K562 (cell line): ENCODE measurements at regions of chr1 and their contacts with region 1.

Region 1: GRCh38 chr1:51519048-51519864 is at the start of gene EPS15:
- DNase-seq: peak; percentile 94 to 96 (median 96)
- ATAC-seq: peak; percentile 73
- H3K4me3 ChIP-seq: peak within 1 kb of the TSS; percentile 59
- H3K27ac ChIP-seq: peak within 1 kb of the TSS; percentile 84
- H3K4me1 ChIP-seq: peaks cover 9 to 37% of the 10 kb centered on the region in 2 experiments
- H3K27me3 ChIP-seq: no peaks in the 10 kb centered on the region
- CTCF ChIP-seq: no peak
- EP300 ChIP-seq: peak; percentile 50; the same call in 1 of the 2 replicates
- POLR2A ChIP-seq: peak; percentile 76
- RAD21 ChIP-seq: peak; percentile 15 to 19; a peak in 1 of 4 replicates
- polyA plus RNA-seq, gene EPS15: 23.1 to 31.6 TPM

Region 2: DNA sequence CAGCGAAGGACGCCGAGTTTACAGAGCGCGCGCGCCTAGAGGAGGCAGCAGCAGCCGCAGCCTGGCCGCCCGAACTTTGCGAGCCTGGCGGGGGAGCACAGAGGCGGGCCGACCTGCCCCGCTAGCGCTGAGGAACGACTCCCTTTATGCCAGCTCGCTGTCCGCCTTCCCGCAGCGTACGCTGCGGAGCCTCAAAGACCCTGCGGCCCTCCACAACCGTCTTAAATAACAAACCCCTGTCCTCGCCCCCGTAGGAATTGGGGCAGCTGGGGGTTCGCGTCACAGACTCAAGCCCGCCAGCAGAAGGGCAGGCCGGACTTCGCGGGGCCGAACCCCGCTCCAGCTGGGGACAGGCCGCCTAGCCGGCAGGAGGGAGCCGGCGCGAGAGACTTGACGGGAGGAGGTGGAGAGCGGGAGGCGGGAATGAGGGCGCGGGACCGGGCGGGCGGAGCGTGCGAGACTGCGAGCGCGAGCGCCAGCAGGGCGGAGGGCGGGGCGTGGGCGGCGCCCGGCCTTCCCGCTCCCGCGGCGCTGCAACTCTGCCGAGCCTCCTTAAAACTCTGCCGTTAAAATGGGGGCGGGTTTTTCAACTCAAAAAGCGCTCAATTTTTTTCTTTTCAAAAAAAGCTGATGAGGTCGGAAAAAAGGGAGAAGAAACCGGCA is 551.0 kb before region 1 on chr1:
- CTCF ChIA-PET with region 1: no interaction called
- POLR2A ChIA-PET with region 1: no interaction called
- in situ Hi-C with region 1: no loop called
- intact Hi-C with region 1: loop called (anchors 5 kb)
- DNase-seq: peak; percentile 93 to 97 (median 96)
- ATAC-seq: peak; percentile 75
- H3K4me3 ChIP-seq: peak overlapping the region; percentile 78
- H3K27ac ChIP-seq: peak overlapping the region; percentile 92
- H3K4me1 ChIP-seq: peaks cover 3 to 15% of the 10 kb centered on the region in 2 experiments; a peak in 3 of 5 replicates
- H3K27me3 ChIP-seq: no peaks in the 10 kb centered on the region
- CTCF ChIP-seq: peak; percentile 42 to 67 (median 59); a peak in 4 of 6 replicates
- EP300 ChIP-seq: peak; percentile 55
- POLR2A ChIP-seq: peak; percentile 89
- RAD21 ChIP-seq: peak; percentile 40 to 50; a peak in 3 of 4 replicates

Region 3: GRCh38 chr1:51119331-51119730 is 399.9 kb before region 1 on chr1:
- CTCF ChIA-PET with region 1: no interaction called
- POLR2A ChIA-PET with region 1: no interaction called
- in situ Hi-C with region 1: no loop called
- intact Hi-C with region 1: no loop called
- DNase-seq: no peak
- ATAC-seq: no peak
- H3K4me3 ChIP-seq: no peak overlapping the region
- H3K27ac ChIP-seq: no peak overlapping the region
- H3K4me1 ChIP-seq: peaks cover 0 to 6% of the 10 kb centered on the region in 2 experiments; a peak in 2 of 5 replicates
- H3K27me3 ChIP-seq: peaks cover 4 to 10% of the 10 kb centered on the region in 2 experiments; a peak in 3 of 5 replicates
- CTCF ChIP-seq: no peak
- EP300 ChIP-seq: no peak
- POLR2A ChIP-seq: no peak
- RAD21 ChIP-seq: no peak

Region 4: DNA sequence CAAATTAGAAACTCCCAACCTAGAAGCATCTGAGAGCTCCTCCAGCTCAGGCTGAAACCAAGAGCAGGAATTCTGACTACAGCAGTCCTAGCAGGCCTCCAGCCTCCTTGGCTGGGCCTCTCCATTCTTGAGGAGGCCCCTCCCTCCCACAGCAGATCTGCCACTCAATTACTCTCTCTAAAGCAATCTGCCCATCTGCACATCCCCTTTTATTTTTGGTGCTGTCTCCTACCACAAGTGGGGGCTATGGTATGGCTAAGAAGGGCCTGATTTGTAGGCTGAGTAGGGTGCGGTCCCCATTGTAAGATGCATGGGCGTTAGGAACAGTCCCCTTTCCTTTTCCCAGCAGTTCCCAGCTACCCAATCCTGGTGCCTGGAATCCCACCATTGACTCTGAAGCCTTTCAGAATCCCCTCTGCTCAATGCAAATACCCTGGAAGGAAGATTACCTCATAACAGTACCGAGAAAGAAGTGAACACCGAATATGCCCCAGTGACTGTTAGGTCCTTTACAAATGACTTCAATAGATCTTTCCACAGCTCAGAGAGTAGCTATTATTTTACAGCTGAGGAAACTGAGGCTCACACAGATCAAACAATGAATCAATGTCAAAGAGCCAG is 177.3 kb before region 1 on chr1:
- CTCF ChIA-PET with region 1: no interaction called
- POLR2A ChIA-PET with region 1: interaction called, 3 read pairs
- in situ Hi-C with region 1: no loop called
- intact Hi-C with region 1: loop called (anchors 5 kb)
- DNase-seq: peak; percentile 48 to 68 (median 58)
- ATAC-seq: peak; percentile 82
- H3K4me3 ChIP-seq: no peak overlapping the region
- H3K27ac ChIP-seq: no peak overlapping the region
- H3K4me1 ChIP-seq: peaks cover 0 to 17% of the 10 kb centered on the region in 2 experiments; a peak in 2 of 5 replicates
- H3K27me3 ChIP-seq: peaks cover 0 to 8% of the 10 kb centered on the region in 2 experiments; a peak in 3 of 5 replicates
- CTCF ChIP-seq: peak; percentile 72 to 76 (median 74)
- EP300 ChIP-seq: no peak
- POLR2A ChIP-seq: no peak
- RAD21 ChIP-seq: peak; percentile 46 to 80

Region 5: GRCh38 chr1:51410568-51411460 is 108.4 kb before region 1 on chr1:
- CTCF ChIA-PET with region 1: no interaction called
- POLR2A ChIA-PET with region 1: no interaction called
- in situ Hi-C with region 1: no loop called
- intact Hi-C with region 1: no loop called
- DNase-seq: no peak
- ATAC-seq: no peak
- H3K4me3 ChIP-seq: no peak overlapping the region
- H3K27ac ChIP-seq: no peak overlapping the region
- H3K4me1 ChIP-seq: no peaks in the 10 kb centered on the region
- H3K27me3 ChIP-seq: no peaks in the 10 kb centered on the region
- CTCF ChIP-seq: no peak
- EP300 ChIP-seq: no peak
- POLR2A ChIP-seq: no peak
- RAD21 ChIP-seq: no peak

Region 6: GRCh38 chr1:51445351-51446090 is 73.7 kb before region 1 on chr1:
- CTCF ChIA-PET with region 1: no interaction called
- POLR2A ChIA-PET with region 1: no interaction called
- in situ Hi-C with region 1: no loop called
- intact Hi-C with region 1: loop called (anchors 5 kb)
- DNase-seq: no peak
- ATAC-seq: no peak; the same call in 1 of the 3 replicates
- H3K4me3 ChIP-seq: no peak overlapping the region
- H3K27ac ChIP-seq: no peak overlapping the region; the same call in 2 of the 3 replicates
- H3K4me1 ChIP-seq: peaks cover 0 to 16% of the 10 kb centered on the region in 2 experiments; a peak in 4 of 5 replicates
- H3K27me3 ChIP-seq: no peaks in the 10 kb centered on the region
- CTCF ChIP-seq: no peak
- EP300 ChIP-seq: no peak
- POLR2A ChIP-seq: no peak
- RAD21 ChIP-seq: no peak

Region 7: DNA sequence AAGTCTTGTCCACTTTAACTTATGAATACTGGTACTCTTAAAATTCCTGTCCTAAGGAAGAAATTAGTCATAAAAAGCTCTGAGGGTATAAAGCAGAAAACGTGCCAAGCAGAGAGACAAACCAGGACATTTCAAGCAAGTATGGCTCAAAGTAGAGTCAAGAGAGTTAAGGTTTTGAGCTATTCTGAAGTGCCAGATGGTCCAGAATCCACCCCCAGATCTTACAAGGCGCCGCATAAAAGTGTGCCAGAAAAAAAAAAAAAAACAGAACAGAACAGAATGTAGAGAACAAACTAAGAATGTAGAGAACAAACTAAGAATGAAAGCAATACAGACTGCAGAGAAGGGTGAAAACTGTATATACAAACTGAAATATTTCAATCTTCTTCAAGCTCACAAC is 12.7 kb before region 1 on chr1:
- CTCF ChIA-PET with region 1: no interaction called
- POLR2A ChIA-PET with region 1: interaction called, 14 read pairs
- in situ Hi-C with region 1: no loop called
- intact Hi-C with region 1: no loop called
- DNase-seq: no peak
- ATAC-seq: peak; percentile 13; the same call in 1 of the 3 replicates
- H3K4me3 ChIP-seq: no peak overlapping the region
- H3K27ac ChIP-seq: no peak overlapping the region
- H3K4me1 ChIP-seq: peaks cover 4 to 15% of the 10 kb centered on the region in 2 experiments; a peak in 3 of 5 replicates
- H3K27me3 ChIP-seq: no peaks in the 10 kb centered on the region
- CTCF ChIP-seq: no peak
- EP300 ChIP-seq: no peak
- POLR2A ChIP-seq: no peak
- RAD21 ChIP-seq: no peak